Right lobe of liver (tissue), 6 donors: ENCODE measurements at regions of chr22 and their contacts with region 1.

Region 1: DNA sequence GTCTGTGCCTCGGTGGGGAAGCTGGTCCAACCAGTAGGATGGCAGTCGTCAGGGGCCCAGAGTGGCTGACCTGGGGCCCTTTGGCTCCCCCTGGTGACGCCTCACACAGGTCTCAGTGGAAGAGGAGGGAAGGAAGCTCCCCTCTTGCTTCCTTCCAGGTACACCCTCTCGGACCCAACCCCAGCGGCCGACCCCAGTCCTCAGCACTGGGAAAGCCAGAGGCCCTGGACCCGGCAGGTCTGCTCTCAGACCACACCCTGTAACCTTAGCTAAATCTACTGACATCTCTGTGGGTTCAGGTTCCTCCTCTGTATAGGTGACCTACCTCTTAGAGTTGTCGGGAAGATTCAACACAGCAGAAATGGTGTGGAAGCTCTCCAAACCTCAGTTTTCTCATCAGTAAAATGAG is 3.4 kb upstream of the SCUBE1 start:
- DNase-seq: peak; percentile 50 to 61 (median 53)
- ATAC-seq: peak; percentile 5 to 48 (median 20)
- H3K4me3 ChIP-seq: no peak overlapping the region
- H3K27ac ChIP-seq: peak overlapping the region in 2 of 3 donors; percentile 44 to 75
- H3K4me1 ChIP-seq: peaks cover 0 to 25% (median 12%) of the 10 kb centered on the region in 4 donors
- H3K27me3 ChIP-seq: no peaks in the 10 kb centered on the region
- CTCF ChIP-seq: peak; percentile 48 to 54 (median 50)
- POLR2A ChIP-seq: no peak

Region 2: DNA sequence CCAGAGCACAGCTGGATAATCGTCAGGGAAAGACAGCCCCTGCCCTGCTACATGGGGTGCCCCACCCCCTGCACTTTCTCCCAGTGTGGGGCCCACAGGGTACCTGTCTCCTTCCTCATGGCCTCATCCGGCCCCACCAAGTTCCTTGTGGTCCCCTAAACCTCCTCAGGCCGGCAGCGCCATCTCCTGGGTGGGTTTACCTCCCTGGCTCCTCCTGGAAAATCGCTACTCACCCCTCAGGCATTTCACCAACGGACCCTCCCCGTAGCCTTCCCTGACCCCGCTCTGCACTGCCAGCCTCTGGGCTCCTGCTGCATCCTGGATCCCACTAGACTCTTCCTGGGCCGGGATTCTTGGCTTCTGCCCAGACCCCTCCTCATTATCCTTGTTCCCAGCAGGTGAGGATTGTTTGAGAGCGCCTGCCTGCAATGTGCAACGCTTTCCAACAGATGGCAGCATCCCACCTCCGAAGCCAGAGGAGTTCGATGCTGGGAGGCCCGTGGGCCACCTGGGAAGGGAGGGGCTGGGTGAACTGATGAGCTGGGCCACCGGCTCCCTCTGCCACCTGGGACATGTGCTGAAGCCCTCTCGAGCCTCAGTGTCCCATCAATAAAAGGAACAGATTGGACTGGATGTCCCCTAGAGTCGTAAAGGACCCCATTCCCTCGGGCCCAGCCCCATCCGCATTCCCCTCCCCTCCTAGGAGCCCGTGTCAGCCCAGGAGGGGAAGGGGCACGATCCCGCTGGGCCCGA is 115.4 kb before region 1 on chr22:
- intact Hi-C with region 1: loop called in 1 of 2 experiments (anchors 5 kb)
- DNase-seq: peak; percentile 66 to 72 (median 68)
- ATAC-seq: peak; percentile 33 to 46 (median 40)
- H3K4me3 ChIP-seq: no peak overlapping the region
- H3K27ac ChIP-seq: no peak overlapping the region
- H3K4me1 ChIP-seq: peaks cover 0 to 44% (median 23%) of the 10 kb centered on the region in 4 donors
- H3K27me3 ChIP-seq: no peaks in the 10 kb centered on the region
- CTCF ChIP-seq: peak; percentile 89 to 96 (median 92)
- POLR2A ChIP-seq: no peak

Region 3: GRCh38 chr22:43273902-43274484 is 72.5 kb before region 1 on chr22:
- intact Hi-C with region 1: loop called in 1 of 2 experiments (anchors 10 kb)
- DNase-seq: peak in 1 of 3 donors; percentile 58
- ATAC-seq: peak; percentile 66 to 80 (median 75)
- H3K4me3 ChIP-seq: no peak overlapping the region
- H3K27ac ChIP-seq: no peak overlapping the region
- H3K4me1 ChIP-seq: peaks cover 0 to 10% (median 5%) of the 10 kb centered on the region in 4 donors
- H3K27me3 ChIP-seq: no peaks in the 10 kb centered on the region
- CTCF ChIP-seq: peak; percentile 65 to 81 (median 72)
- POLR2A ChIP-seq: no peak

Region 4: GRCh38 chr22:43412808-43413795 is 66.6 kb after region 1 on chr22:
- intact Hi-C with region 1: no loop called
- DNase-seq: peak in 2 of 3 donors; percentile 49 to 51
- ATAC-seq: peak in 3 of 4 donors; percentile 47 to 63 (median 51)
- H3K4me3 ChIP-seq: no peak overlapping the region
- H3K27ac ChIP-seq: no peak overlapping the region
- H3K4me1 ChIP-seq: peaks cover 0 to 5% (median 1%) of the 10 kb centered on the region in 4 donors
- H3K27me3 ChIP-seq: no peaks in the 10 kb centered on the region
- CTCF ChIP-seq: no peak
- POLR2A ChIP-seq: no peak